G401 (cell line): ENCODE measurements at regions of chr11 and their contacts with region 1.

Region 1: DNA sequence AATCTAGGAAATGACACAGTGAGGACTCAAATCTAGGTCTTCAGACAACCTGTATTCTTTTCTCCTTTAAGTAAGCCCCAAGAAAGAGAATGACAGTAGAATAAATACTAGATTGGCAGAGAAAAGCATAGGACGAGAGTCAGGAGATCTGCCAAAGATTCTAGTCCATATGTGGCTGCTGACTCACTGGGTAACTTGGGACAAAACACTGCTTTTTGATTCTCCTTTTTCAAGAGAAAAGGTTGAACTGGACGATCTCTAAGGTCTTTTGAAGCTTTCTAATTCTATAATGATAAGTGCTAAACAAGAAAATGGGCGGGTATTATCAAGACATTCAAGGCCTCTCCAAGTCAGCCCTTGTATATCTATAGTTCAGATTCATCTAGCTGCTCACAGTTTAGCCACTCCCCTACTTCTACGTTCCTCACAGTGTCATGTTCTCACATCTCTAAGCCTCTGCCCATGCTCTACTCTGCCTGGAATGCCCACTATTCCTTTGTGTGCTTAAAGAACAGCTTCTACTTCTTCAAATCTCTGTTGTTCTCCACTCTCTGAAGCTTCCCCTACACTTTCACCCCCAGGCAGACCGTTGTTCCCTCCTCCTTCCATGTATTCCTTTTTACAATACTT is 53.0 kb downstream of the RELT start:
- DNase-seq: no peak

Region 2: DNA sequence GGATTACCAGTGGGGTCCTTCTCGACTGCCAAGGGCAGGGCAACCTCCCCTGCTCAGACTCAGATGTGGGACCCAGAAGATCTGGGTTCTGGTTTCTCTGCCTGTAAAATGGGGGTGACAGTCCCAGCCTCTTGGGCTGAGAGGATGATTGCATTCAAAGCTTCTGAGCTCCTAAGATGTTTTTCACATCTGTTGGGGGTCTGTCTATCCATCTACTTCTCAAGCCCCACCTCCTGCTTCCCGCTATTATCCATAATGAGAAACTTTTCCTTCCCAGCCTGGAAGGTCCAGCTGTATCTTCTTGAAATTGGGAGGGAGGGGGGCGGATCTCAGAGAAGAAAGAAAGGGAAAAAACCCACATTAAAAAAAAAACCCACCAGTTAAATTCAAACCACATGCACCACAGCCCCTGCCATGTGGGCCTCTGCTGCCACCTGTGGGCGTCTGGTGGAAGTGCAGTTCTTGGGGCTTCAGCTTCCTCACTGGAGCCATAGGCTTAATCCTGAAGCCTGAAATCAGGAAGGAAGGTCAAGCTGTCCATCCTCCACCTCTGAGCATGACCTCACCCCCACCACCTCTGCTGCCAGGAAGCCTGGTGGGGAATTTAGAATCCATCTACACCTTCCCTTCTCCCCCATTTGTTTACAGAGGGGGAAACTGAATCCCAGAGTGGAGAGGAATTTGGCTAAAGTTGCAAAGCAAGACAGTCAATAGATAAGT is 93.9 kb before region 1 on chr11:
- in situ Hi-C with region 1: no loop called
- DNase-seq: peak; percentile 85

Region 3: DNA sequence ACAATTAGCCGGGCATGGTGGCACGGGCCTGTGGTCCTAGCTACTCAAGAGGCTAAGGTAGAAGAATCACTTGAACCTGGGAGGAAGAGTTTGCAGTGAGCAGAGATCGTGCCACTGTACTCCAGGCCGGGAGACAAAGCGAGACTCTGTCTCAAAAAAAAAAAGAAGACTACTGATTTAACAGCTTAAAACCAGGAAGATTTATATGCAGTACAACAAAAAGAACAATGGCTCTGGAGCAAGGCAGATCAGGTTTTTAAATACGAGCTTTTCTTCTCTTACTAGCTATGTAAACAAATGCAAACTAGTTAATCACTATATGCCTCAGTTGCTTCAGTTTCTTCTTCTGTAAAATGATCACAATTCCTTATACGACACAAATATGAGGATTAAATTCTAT is 161.8 kb after region 1 on chr11:
- in situ Hi-C with region 1: loop called (anchors 5 kb)
- DNase-seq: no peak